Right lobe of liver (tissue), 6 donors: ENCODE measurements at regions of chr3 and their contacts with region 1.

Region 1: GRCh38 chr3:14461748-14462324 is 59.4 kb downstream of the SLC6A6 start:
- DNase-seq: peak; percentile 67 to 76 (median 74)
- ATAC-seq: peak; percentile 80 to 90 (median 85)
- H3K4me3 ChIP-seq: no peak overlapping the region
- H3K27ac ChIP-seq: no peak overlapping the region
- H3K4me1 ChIP-seq: peaks cover 0 to 2% (median 0%) of the 10 kb centered on the region in 4 donors
- H3K27me3 ChIP-seq: no peaks in the 10 kb centered on the region
- CTCF ChIP-seq: peak; percentile 58 to 70 (median 63)
- POLR2A ChIP-seq: no peak

Region 2: GRCh38 chr3:13895155-13896105 is 566.4 kb before region 1 on chr3:
- intact Hi-C with region 1: loop called in 1 of 2 experiments (anchors 10 kb)
- DNase-seq: peak; percentile 93 to 95 (median 95)
- ATAC-seq: peak; percentile 97 to 98 (median 98)
- H3K4me3 ChIP-seq: peak overlapping the region; percentile 41 to 73 (median 58)
- H3K27ac ChIP-seq: peak overlapping the region in 2 of 3 donors; percentile 1 to 2
- H3K4me1 ChIP-seq: peaks cover 0 to 8% (median 2%) of the 10 kb centered on the region in 4 donors
- H3K27me3 ChIP-seq: no peaks in the 10 kb centered on the region
- CTCF ChIP-seq: no peak
- POLR2A ChIP-seq: peak; percentile 61

Region 3: GRCh38 chr3:14203521-14204079 is 258.2 kb before region 1 on chr3:
- intact Hi-C with region 1: loop called in 1 of 2 experiments (anchors 10 kb)
- DNase-seq: peak; percentile 48 to 75 (median 67)
- ATAC-seq: peak; percentile 72 to 77 (median 76)
- H3K4me3 ChIP-seq: no peak overlapping the region
- H3K27ac ChIP-seq: peak overlapping the region in 1 of 3 donors; percentile 44
- H3K4me1 ChIP-seq: peaks cover 0 to 42% (median 20%) of the 10 kb centered on the region in 4 donors
- H3K27me3 ChIP-seq: no peaks in the 10 kb centered on the region
- CTCF ChIP-seq: peak; percentile 87 to 95 (median 90)
- POLR2A ChIP-seq: no peak

Region 4: DNA sequence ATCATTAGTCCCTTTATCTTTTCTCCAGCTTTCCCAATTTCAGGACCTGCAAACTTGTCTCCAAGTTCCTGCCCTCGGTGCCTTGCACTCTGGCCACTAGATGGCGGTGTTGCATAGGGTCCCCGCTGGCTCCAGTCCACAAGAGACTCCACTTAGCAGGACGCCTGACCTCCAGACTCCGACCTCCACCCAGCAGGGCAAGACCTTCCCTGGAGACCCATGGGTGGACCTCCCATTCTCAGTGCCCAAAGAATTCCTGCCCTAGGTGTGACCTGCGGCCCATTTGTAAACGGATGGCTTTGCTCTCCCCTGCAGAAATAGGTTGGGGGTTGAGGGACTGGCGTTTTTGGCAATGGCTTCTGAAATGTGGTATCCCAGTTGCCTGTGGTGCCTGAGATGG is 200.6 kb before region 1 on chr3:
- intact Hi-C with region 1: loop called (anchors 5 kb)
- DNase-seq: peak; percentile 80 to 83 (median 82)
- ATAC-seq: peak; percentile 87 to 96 (median 91)
- H3K4me3 ChIP-seq: no peak overlapping the region
- H3K27ac ChIP-seq: no peak overlapping the region
- H3K4me1 ChIP-seq: no peaks in the 10 kb centered on the region
- H3K27me3 ChIP-seq: no peaks in the 10 kb centered on the region
- CTCF ChIP-seq: peak; percentile 91 to 99 (median 98)
- POLR2A ChIP-seq: no peak